Activated CD4-positive, alpha-beta T cell treated with anti-CD3 and anti-CD28 coated beads for 36 hours (primary cell): ENCODE measurements at regions of chr5 and their contacts with region 1.

Region 1: GRCh38 chr5:168374532-168374931 is 83.1 kb downstream of the WWC1 start:
- DNase-seq: no peak
- ATAC-seq: no peak
- H3K4me3 Mint-ChIP-seq: no peak overlapping the region
- H3K27ac Mint-ChIP-seq: no peak overlapping the region
- H3K4me1 Mint-ChIP-seq: peaks cover 7% of the 10 kb centered on the region
- H3K27me3 Mint-ChIP-seq: no peaks in the 10 kb centered on the region

Region 2: GRCh38 chr5:168006456-168007130 is 367.9 kb before region 1 on chr5:
- CTCF ChIA-PET with region 1: no interaction called
- POLR2A ChIA-PET with region 1: interaction called, 11 read pairs
- intact Hi-C with region 1: no loop called
- DNase-seq: no peak
- ATAC-seq: no peak
- H3K4me3 Mint-ChIP-seq: no peak overlapping the region
- H3K27ac Mint-ChIP-seq: no peak overlapping the region
- H3K4me1 Mint-ChIP-seq: no peaks in the 10 kb centered on the region
- H3K27me3 Mint-ChIP-seq: peaks cover 2% of the 10 kb centered on the region